Heart left ventricle (tissue), 16 donors: ENCODE measurements at regions of chr3 and their contacts with region 1.

Region 1: DNA sequence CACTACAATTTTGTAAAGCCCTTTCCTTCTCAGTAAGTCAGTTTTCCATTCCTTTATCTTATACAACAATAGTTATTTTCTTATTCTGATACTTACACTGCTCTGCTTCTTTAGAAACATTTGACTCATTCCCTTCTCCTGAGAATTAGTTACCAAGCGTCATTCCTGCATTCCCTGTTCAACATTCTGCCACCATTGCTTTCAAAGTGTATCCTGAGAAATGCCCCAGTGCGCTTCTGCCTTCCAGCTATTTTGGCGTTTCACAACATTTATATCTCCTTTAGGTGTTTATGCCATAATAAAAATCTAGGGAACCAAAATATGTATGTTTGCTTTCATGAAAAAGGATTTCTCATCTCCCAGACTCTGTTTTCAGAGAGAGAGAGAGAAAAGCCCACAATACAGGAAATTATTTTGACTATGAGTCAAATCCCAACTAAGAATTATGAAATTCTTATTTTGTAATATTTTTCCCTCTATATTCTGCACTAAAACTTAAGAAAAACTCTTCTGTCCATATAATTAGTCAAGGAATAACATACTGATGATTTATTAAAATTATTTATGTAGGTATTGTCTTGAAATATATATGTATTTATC is 118.2 kb upstream of the RAP2B start:
- DNase-seq: no peak
- ATAC-seq: peak in 1 of 4 donors; percentile 54
- H3K4me3 ChIP-seq: peak overlapping the region in 2 of 12 donors; percentile 18 to 43
- H3K27ac ChIP-seq: peak overlapping the region in 1 of 12 donors; percentile 64
- H3K4me1 ChIP-seq: peaks cover 0 to 11% (median 0%) of the 10 kb centered on the region in 12 donors
- H3K27me3 ChIP-seq: no peaks in the 10 kb centered on the region
- CTCF ChIP-seq: no peak
- POLR2A ChIP-seq: no peak

Region 2: GRCh38 chr3:153284282-153284938 is 240.6 kb after region 1 on chr3:
- intact Hi-C with region 1: loop called in 3 of 10 experiments (anchors 5 to 10 kb)
- DNase-seq: peak in 4 of 5 donors; percentile 42 to 72 (median 50)
- ATAC-seq: peak; percentile 75 to 94 (median 90)
- H3K4me3 ChIP-seq: no peak overlapping the region
- H3K27ac ChIP-seq: peak overlapping the region in 8 of 12 donors; percentile 1 to 84 (median 29)
- H3K4me1 ChIP-seq: peaks cover 0 to 45% (median 15%) of the 10 kb centered on the region in 12 donors
- H3K27me3 ChIP-seq: no peaks in the 10 kb centered on the region
- CTCF ChIP-seq: no peak
- POLR2A ChIP-seq: no peak

Region 3: GRCh38 chr3:153291056-153291685 is 247.3 kb after region 1 on chr3:
- intact Hi-C with region 1: loop called in 7 of 10 experiments (anchors 2 to 10 kb)
- DNase-seq: no peak
- ATAC-seq: peak in 1 of 4 donors; percentile 57
- H3K4me3 ChIP-seq: no peak overlapping the region
- H3K27ac ChIP-seq: peak overlapping the region in 1 of 12 donors; percentile 42
- H3K4me1 ChIP-seq: peaks cover 0 to 52% (median 0%) of the 10 kb centered on the region in 12 donors
- H3K27me3 ChIP-seq: no peaks in the 10 kb centered on the region
- CTCF ChIP-seq: peak in 11 of 12 donors; percentile 9 to 60 (median 40)
- POLR2A ChIP-seq: no peak

Region 4: DNA sequence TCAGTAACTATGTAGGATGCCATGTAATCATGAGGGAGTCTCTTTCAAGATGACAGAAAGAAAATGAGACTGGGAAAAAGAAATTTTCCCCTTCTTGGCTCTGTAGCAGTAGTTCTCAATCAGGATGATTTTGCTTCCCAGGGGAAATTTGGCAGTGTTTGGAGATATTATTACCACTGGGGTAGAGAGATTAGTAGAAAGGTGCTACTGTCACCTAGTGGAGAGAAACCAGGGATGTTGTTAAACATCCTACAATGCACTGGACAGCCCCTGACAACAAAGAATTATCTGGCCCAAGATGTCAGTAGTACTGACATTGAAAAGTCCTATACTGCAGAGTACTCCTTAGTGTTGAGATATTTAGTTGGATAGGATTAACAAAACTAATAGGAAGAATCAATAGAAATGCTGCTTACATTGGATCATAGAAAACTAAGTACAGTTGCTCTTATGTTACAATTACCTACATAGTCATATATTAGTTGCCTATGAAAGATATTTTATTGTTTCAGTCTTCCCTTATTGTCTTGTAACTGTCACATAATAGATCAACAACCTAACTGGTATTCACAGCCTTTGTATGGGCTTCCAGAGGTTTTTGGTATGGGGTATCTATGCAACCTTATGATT is 551.5 kb after region 1 on chr3:
- intact Hi-C with region 1: loop called in 9 of 10 experiments (anchors 5 to 10 kb)
- DNase-seq: no peak
- ATAC-seq: peak in 3 of 4 donors; percentile 53 to 77 (median 65)
- H3K4me3 ChIP-seq: no peak overlapping the region
- H3K27ac ChIP-seq: no peak overlapping the region
- H3K4me1 ChIP-seq: peaks cover 0 to 11% (median 0%) of the 10 kb centered on the region in 12 donors
- H3K27me3 ChIP-seq: no peaks in the 10 kb centered on the region
- CTCF ChIP-seq: peak; percentile 34 to 67 (median 56)
- POLR2A ChIP-seq: no peak

Region 5: GRCh38 chr3:153768561-153769469 is 725.0 kb after region 1 on chr3:
- intact Hi-C with region 1: loop called (anchors 1 to 5 kb)
- DNase-seq: peak in 1 of 5 donors; percentile 17
- ATAC-seq: peak; percentile 69 to 85 (median 84)
- H3K4me3 ChIP-seq: no peak overlapping the region
- H3K27ac ChIP-seq: no peak overlapping the region
- H3K4me1 ChIP-seq: no peaks in the 10 kb centered on the region
- H3K27me3 ChIP-seq: no peaks in the 10 kb centered on the region
- CTCF ChIP-seq: peak; percentile 71 to 84 (median 78)
- POLR2A ChIP-seq: no peak

Region 6: GRCh38 chr3:153970741-153971347 is 927.0 kb after region 1 on chr3:
- intact Hi-C with region 1: loop called in 1 of 10 experiments (anchors 10 kb)
- DNase-seq: no peak
- ATAC-seq: no peak
- H3K4me3 ChIP-seq: no peak overlapping the region
- H3K27ac ChIP-seq: no peak overlapping the region
- H3K4me1 ChIP-seq: peaks cover 0 to 6% (median 0%) of the 10 kb centered on the region in 12 donors
- H3K27me3 ChIP-seq: no peaks in the 10 kb centered on the region
- CTCF ChIP-seq: peak in 9 of 12 donors; percentile 13 to 56 (median 31)
- POLR2A ChIP-seq: no peak

Region 7: GRCh38 chr3:154252759-154253638 is 1209.2 kb after region 1 on chr3:
- intact Hi-C with region 1: loop called in 2 of 10 experiments (anchors 5 kb)
- DNase-seq: peak; percentile 87 to 91 (median 88)
- ATAC-seq: peak; percentile 82 to 94 (median 93)
- H3K4me3 ChIP-seq: peak overlapping the region in 6 of 12 donors; percentile 11 to 40 (median 18)
- H3K27ac ChIP-seq: no peak overlapping the region
- H3K4me1 ChIP-seq: peaks cover 0 to 8% (median 4%) of the 10 kb centered on the region in 12 donors
- H3K27me3 ChIP-seq: no peaks in the 10 kb centered on the region
- CTCF ChIP-seq: peak; percentile 81 to 95 (median 88)
- POLR2A ChIP-seq: no peak